Aorta (tissue), 5 donors: ENCODE measurements at regions of chr11 and their contacts with region 1.

Region 1: DNA sequence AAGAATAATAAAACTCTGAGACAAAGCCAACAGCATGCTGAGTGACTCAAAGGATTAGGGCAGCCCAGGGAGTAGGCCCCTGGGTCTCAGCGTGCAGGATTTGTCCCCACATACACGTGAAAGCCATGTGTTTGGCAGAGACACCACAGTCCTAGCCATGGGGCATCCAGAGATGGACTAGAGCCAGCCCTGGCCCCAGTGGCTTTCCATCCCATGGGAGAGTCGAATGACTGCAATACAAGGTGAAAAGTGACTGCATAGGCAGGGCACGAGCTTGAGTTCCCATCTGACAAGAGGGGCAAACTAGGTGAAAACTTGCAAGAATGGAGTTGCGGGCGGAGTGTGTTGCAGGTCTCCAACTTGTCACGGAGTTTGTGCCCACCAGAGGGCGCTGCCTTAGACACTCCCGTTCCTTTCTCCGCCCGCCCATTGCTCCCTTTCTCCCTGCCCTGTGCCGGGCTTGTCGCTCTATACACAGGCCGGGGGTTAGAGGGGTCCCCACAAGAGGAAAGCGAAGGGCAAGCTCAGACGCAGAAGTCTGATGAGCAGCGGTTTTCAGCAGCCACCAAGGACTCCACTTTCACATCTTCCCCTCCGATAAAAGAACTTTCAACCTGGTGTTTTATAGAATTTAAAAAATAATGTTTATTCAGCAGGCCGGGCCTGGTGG is 24.2 kb downstream of the TSKU start:
- DNase-seq: peak; percentile 90 to 96
- ATAC-seq: peak; percentile 92
- H3K4me3 ChIP-seq: no peak overlapping the region
- H3K27ac ChIP-seq: no peak overlapping the region
- H3K4me1 ChIP-seq: no peaks in the 10 kb centered on the region
- H3K27me3 ChIP-seq: no peaks in the 10 kb centered on the region

Region 2: GRCh38 chr11:76830639-76831327 is 23.4 kb after region 1 on chr11:
- intact Hi-C with region 1: no loop called
- DNase-seq: no peak
- ATAC-seq: peak; percentile 11
- H3K4me3 ChIP-seq: no peak overlapping the region
- H3K27ac ChIP-seq: no peak overlapping the region
- H3K4me1 ChIP-seq: no peaks in the 10 kb centered on the region
- H3K27me3 ChIP-seq: peaks cover 0 to 4% of the 10 kb centered on the region in 2 donors

Region 3: DNA sequence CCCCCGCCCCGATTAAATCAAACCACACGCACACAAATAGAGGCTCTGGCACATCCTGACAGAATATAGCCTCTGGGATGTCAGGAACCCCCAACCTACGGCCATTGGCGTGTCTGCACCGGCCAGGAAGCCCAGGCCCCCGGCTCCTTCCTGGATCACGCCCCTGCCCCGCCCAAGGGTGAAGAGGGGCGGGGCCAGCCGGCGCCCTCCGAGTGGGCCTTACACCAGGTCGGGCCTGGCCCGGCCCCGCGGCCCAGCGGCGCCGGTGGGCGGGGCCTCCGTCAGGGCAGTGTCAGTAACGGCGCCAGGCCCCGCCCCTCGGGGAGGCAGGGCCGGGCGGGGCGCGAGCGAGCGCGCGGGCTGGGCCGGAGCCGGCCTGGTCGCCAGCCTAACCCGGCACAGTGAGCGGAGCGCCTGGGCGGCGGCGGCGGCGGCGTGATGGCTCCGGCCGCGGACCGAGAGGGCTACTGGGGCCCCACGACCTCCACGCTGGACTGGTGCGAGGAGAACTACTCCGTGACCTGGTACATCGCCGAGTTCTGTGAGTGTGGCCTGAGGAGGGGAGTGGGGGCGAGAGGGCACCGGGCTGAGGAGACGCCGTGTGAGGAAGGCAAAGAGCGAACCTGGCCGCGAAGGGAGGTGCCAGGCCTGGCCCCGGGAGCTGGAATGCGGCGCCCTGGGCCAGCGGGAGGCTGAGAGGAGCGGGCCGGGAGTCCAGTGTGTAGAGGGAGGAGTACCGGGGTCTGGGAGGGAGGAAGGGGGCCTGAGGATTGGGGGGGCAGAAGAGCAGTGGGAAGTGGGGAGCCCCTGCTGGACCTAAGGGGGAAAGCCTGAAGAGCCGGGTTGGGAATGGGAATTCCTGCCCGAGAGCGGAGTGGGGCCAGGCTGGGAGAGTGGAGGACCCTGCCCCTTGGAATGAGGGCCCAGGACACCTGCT is 53.5 kb after region 1 on chr11 and contains the start of gene ACER3:
- intact Hi-C with region 1: loop called (anchors 5 kb)
- DNase-seq: peak; percentile 95 to 97
- ATAC-seq: peak; percentile 97
- H3K4me3 ChIP-seq: peak within 1 kb of the TSS; percentile 20 to 44
- H3K27ac ChIP-seq: peak within 1 kb of the TSS in 1 of 2 donors; percentile 48
- H3K4me1 ChIP-seq: no peaks in the 10 kb centered on the region
- H3K27me3 ChIP-seq: no peaks in the 10 kb centered on the region
- total RNA-seq, gene ACER3: 17.6 to 27.3 TPM

Region 4: GRCh38 chr11:76919887-76920746 is 112.8 kb after region 1 on chr11:
- intact Hi-C with region 1: loop called (anchors 2 to 5 kb)
- DNase-seq: peak; percentile 80 to 86
- ATAC-seq: peak; percentile 92
- H3K4me3 ChIP-seq: no peak overlapping the region
- H3K27ac ChIP-seq: no peak overlapping the region
- H3K4me1 ChIP-seq: no peaks in the 10 kb centered on the region
- H3K27me3 ChIP-seq: no peaks in the 10 kb centered on the region